Prostate gland (tissue), 2 donors: ENCODE measurements at regions of chr4 and their contacts with region 1.

Region 1: GRCh38 chr4:38681281-38681991 is 17.4 kb downstream of the KLF3 start:
- DNase-seq: no peak
- H3K4me3 ChIP-seq: no peak overlapping the region
- H3K27ac ChIP-seq: no peak overlapping the region
- H3K4me1 ChIP-seq: peaks cover under 1% of the 10 kb centered on the region
- H3K27me3 ChIP-seq: no peaks in the 10 kb centered on the region
- CTCF ChIP-seq: no peak
- POLR2A ChIP-seq: no peak

Region 2: DNA sequence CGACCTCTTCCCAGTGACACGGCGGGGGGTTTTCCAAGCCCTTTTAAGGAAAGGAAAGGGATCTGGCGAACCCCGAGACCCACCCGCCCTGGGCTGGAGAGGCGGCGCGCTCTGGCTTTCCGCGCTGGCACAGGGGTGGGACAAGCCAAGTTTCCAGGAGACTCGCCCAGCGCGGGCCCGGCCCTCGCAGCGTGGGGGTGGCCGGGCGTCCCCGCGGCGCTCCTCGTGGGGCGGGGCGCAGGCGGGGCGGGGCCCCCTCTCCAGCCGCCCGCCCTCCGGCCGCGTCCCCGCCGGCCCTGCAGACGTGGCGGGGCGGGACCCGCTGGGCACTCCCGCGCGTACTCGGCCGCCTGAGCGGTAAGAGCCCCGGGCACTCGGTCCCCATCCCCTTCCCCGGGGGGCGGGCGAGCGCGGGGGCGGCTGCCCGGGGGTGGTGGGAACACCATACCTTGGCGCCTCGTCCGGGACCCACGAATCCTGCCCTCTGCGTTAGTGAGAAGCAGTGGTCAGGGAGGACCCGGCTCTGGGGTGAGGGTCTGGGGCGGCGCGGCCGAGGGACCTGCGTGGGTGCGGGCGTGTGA is 186.1 kb after region 1 on chr4 and contains the start of gene FAM114A1:
- intact Hi-C with region 1: loop called (anchors 10 kb)
- DNase-seq: peak; percentile 77
- H3K4me3 ChIP-seq: peak within 1 kb of the TSS; percentile 85 to 86
- H3K27ac ChIP-seq: peak within 1 kb of the TSS; percentile 97
- H3K4me1 ChIP-seq: no peaks in the 10 kb centered on the region
- H3K27me3 ChIP-seq: no peaks in the 10 kb centered on the region
- CTCF ChIP-seq: peak in 1 of 4 experiments; percentile 1
- POLR2A ChIP-seq: peak; percentile 55
- total RNA-seq, gene FAM114A1: 117 to 118 TPM